ENCODE measurements at regions of chr15 and their contacts with region 1.

Region 1: GRCh38 chr15:34241372-34242330 is 16.8 kb downstream of the EMC4 start:
- DNase-seq: no peak
- ATAC-seq: peak; percentile 89
- H3K4me3 ChIP-seq: no peak overlapping the region
- H3K27ac ChIP-seq: no peak overlapping the region
- H3K4me1 ChIP-seq: peaks cover 5% of the 10 kb centered on the region
- H3K27me3 ChIP-seq: no peaks in the 10 kb centered on the region
- CTCF ChIP-seq: peak; percentile 61 to 70 (median 68)
- EP300 ChIP-seq: no peak
- POLR2A ChIP-seq: no peak
- RAD21 ChIP-seq: peak; percentile 66

Region 2: GRCh38 chr15:34331809-34332208 is 90.2 kb after region 1 on chr15:
- CTCF ChIA-PET with region 1: interaction called, 31 read pairs
- POLR2A ChIA-PET with region 1: no interaction called
- RAD21 ChIA-PET with region 1: interaction called, 10 read pairs
- SMC1A ChIA-PET with region 1: interaction called, 19 read pairs
- in situ Hi-C with region 1: no loop called
- intact Hi-C with region 1: loop called (anchors 5 kb)
- DNase-seq: no peak
- ATAC-seq: peak; percentile 13; the same call in 2 of the 3 replicates
- H3K4me3 ChIP-seq: peak overlapping the region; percentile 8
- H3K27ac ChIP-seq: peak overlapping the region; percentile 94
- H3K4me1 ChIP-seq: peaks cover 28% of the 10 kb centered on the region
- H3K27me3 ChIP-seq: no peaks in the 10 kb centered on the region
- CTCF ChIP-seq: no peak
- EP300 ChIP-seq: no peak
- POLR2A ChIP-seq: no peak
- RAD21 ChIP-seq: no peak

Region 3: DNA sequence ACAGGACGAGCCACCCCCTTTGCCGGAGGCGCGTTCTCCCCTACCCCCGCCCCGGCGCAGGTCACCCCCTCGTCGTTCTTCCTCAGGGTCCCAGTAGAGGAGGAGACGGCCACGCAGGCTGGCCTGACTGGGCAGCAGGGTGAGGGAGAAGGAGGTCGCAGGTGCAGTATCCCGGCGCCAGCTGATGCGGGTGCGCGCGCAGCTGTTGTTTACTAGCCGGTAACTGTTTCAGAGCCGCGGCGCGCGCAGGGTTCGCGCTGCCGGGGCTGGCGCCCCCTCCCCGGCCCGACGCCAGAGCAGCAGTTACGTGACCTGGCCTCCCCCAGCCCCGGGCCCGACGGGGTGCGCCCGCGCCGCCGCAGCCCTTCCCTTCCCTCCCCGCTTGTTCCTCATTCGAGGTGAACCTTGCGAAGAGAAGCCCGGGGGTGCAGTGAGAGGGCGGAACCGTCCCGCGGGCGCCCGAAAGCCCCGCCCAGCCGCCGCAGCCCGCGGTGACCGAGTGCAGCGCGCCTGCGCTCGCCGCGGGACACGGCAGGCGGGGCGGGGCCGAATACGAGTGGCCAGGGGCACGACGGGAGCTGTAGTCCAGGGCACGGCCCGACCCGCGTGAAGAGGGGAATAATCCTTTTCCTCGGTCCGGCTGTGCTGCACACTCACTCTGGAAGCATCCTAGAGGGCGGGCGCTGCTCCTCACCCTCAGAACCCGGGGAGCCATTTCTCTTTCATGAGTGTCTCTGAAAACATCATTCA is 96.1 kb after region 1 on chr15 and contains the start of gene SLC12A6:
- CTCF ChIA-PET with region 1: interaction called, 17 read pairs
- POLR2A ChIA-PET with region 1: interaction called, 3 read pairs
- RAD21 ChIA-PET with region 1: interaction called, 13 read pairs
- SMC1A ChIA-PET with region 1: interaction called, 11 read pairs
- in situ Hi-C with region 1: no loop called
- intact Hi-C with region 1: loop called (anchors 5 kb)
- DNase-seq: no peak
- ATAC-seq: peak; percentile 81
- H3K4me3 ChIP-seq: peak within 1 kb of the TSS; percentile 72
- H3K27ac ChIP-seq: peak within 1 kb of the TSS; percentile 94
- H3K4me1 ChIP-seq: peaks cover 14% of the 10 kb centered on the region
- H3K27me3 ChIP-seq: no peaks in the 10 kb centered on the region
- CTCF ChIP-seq: no peak
- EP300 ChIP-seq: no peak
- POLR2A ChIP-seq: peak; percentile 74
- RAD21 ChIP-seq: no peak
- polyA plus RNA-seq, gene SLC12A6: 4.7 to 4.8 TPM

Region 4: DNA sequence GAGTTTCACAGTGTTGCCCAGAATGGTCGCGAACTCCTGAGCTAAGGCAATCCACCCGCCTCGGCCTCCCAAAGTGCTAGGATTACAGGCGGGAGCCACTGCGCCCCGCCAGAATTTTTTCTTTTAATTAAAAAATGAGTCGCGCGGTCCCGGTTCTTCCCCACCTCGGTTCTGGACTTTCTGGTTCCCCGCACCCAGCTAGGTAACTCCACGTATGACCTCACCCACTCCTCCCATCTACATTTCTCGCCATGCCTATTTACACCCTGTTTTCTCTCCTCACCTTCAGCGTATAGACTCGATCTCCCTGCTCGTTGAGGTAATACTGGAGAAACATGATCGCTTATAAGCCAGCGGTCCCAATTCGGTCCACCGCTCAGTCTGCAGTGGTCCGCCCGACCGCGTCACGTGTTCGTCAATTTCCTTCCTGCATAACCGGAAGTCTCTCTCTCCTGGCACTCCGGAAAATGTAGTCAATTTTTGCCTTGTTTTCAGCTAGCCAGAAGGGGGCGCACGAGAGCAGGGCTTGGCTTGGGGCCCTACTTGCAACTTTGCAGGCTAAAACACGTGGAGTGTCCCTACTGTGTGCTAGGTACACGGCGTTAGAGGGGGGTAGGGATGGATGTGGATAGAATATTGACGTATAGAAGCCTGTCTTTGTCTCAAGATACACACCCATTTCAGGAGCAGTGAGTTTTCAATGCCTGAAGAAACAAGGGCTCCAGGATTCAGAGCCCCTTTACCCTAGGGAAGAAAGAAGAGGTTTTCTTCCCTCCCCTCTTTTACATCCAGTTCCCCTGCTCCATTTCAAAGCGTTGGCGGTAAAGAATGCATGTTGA is 101.3 kb after region 1 on chr15 and contains the starts of genes NOP10 and NUTM1:
- CTCF ChIA-PET with region 1: interaction called, 17 read pairs
- POLR2A ChIA-PET with region 1: interaction called, 3 read pairs
- RAD21 ChIA-PET with region 1: interaction called, 13 read pairs
- SMC1A ChIA-PET with region 1: interaction called, 9 read pairs
- in situ Hi-C with region 1: no loop called
- intact Hi-C with region 1: loop called (anchors 5 kb)
- DNase-seq: peak; percentile 86
- ATAC-seq: peak; percentile 93
- H3K4me3 ChIP-seq: peak within 1 kb of the TSS; percentile 85
- H3K27ac ChIP-seq: peak within 1 kb of the TSS; percentile 75
- H3K4me1 ChIP-seq: peaks cover 8% of the 10 kb centered on the region; the same call in 1 of the 2 replicates
- H3K27me3 ChIP-seq: no peaks in the 10 kb centered on the region
- CTCF ChIP-seq: peak; percentile 96 to 99 (median 97)
- EP300 ChIP-seq: 0 out of 4 replicates have a peak, but pooled peaks have one; percentile 15 to 29
- POLR2A ChIP-seq: peak; percentile 87
- RAD21 ChIP-seq: peak; percentile 91
- polyA plus RNA-seq, gene NOP10: 1,758 to 1,778 TPM
- polyA plus RNA-seq, gene NUTM1: not detected

Region 5: DNA sequence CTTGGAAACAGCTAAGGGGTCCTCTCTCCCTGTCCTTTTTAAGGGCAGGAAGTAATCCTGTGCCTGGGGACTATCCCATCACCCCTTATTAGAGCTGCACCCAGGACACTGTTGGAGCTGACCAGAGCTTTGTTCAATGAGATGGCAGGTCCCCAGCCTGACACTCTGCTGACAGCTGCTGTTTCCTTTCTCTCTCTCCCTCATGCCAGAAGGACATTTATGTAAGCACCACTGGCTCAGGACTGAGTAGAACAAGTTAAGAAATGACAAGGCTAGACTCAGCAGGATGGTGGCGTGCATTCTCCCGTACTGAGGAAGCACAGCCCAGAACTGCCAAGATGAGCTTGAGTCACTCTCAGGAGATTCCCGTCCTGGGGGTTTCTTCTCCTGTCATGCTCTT is 495.8 kb after region 1 on chr15:
- CTCF ChIA-PET with region 1: no interaction called
- POLR2A ChIA-PET with region 1: no interaction called
- RAD21 ChIA-PET with region 1: no interaction called
- SMC1A ChIA-PET with region 1: no interaction called
- in situ Hi-C with region 1: no loop called
- intact Hi-C with region 1: no loop called
- DNase-seq: no peak
- ATAC-seq: no peak
- H3K4me3 ChIP-seq: no peak overlapping the region
- H3K27ac ChIP-seq: no peak overlapping the region
- H3K4me1 ChIP-seq: no peaks in the 10 kb centered on the region
- H3K27me3 ChIP-seq: peaks cover 0 to 3% of the 10 kb centered on the region in 2 experiments; a peak in 1 of 4 replicates
- CTCF ChIP-seq: no peak
- EP300 ChIP-seq: no peak
- POLR2A ChIP-seq: no peak
- RAD21 ChIP-seq: no peak